Kidney (tissue), 22 donors: ENCODE measurements at regions of chr9 and their contacts with region 1.

Region 1: GRCh38 chr9:37382161-37382981 is 40.1 kb upstream of the GRHPR start:
- DNase-seq: no peak
- H3K4me3 ChIP-seq: no peak overlapping the region
- H3K27ac ChIP-seq: no peak overlapping the region
- H3K4me1 ChIP-seq: no peaks in the 10 kb centered on the region
- H3K27me3 ChIP-seq: no peaks in the 10 kb centered on the region
- CTCF ChIP-seq: no peak

Region 2: GRCh38 chr9:36873247-36873875 is 509.0 kb before region 1 on chr9:
- intact Hi-C with region 1: loop called (anchors 10 kb)
- DNase-seq: peak; percentile 63 to 79 (median 75)
- H3K4me3 ChIP-seq: no peak overlapping the region
- H3K27ac ChIP-seq: no peak overlapping the region
- H3K4me1 ChIP-seq: no peaks in the 10 kb centered on the region
- H3K27me3 ChIP-seq: peaks cover 2% of the 10 kb centered on the region
- CTCF ChIP-seq: peak; percentile 73

Region 3: GRCh38 chr9:37329576-37329975 is 52.8 kb before region 1 on chr9:
- intact Hi-C with region 1: no loop called
- DNase-seq: peak in 1 of 5 donors; percentile 15
- H3K4me3 ChIP-seq: no peak overlapping the region
- H3K27ac ChIP-seq: no peak overlapping the region
- H3K4me1 ChIP-seq: no peaks in the 10 kb centered on the region
- H3K27me3 ChIP-seq: no peaks in the 10 kb centered on the region
- CTCF ChIP-seq: peak; percentile 22

Region 4: GRCh38 chr9:37753489-37754190 is 371.3 kb after region 1 on chr9 and contains the start of gene TRMT10B:
- intact Hi-C with region 1: no loop called
- DNase-seq: peak; percentile 86 to 93 (median 91)
- H3K4me3 ChIP-seq: peak within 1 kb of the TSS; percentile 78 to 97 (median 90)
- H3K27ac ChIP-seq: peak within 1 kb of the TSS; percentile 34 to 59
- H3K4me1 ChIP-seq: peaks cover 2 to 5% (median 4%) of the 10 kb centered on the region in 3 donors
- H3K27me3 ChIP-seq: no peaks in the 10 kb centered on the region
- CTCF ChIP-seq: no peak
- total RNA-seq, gene TRMT10B: 12.4 TPM